H1 (cell line): ENCODE measurements at regions of chr14 and their contacts with region 1.

Region 1: DNA sequence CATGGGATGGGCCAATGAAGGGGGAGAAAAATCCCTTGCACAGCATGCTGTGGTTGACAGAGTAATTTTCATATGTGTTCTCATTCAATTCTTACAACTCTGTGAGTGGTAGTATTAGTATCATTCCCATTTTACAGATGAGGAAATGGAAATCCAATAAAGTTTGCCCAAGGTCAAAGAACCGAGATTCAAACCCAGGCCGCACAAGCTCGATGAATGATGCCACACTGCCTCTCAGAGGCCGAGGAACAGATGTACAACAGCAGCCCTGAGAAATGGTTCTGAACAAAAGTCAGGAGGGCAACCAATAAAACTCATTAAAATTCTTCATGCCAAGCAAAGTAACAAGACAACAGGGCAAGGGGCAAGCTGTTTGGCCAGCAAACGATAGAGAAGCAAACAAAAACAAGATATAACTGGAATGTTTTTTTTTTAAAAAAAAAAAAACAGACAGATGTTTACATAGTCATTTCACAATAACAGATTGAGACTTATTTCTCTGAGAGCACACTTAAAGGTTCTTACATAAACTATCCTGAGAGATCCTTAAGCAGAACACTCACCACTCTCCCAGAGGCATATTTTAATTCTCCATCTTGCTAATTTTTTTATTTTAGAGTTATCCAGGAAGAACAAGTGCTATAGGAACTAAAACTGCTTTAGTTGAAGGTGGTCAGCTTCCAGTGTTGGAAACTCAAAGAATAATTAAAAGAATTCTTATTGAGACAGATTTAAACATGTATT is 85.8 kb downstream of the EXOC5 start:
- DNase-seq: no peak
- H3K4me3 ChIP-seq: no peak overlapping the region
- H3K27ac ChIP-seq: no peak overlapping the region
- H3K4me1 ChIP-seq: peaks cover 0 to 2% (median 0%) of the 10 kb centered on the region in 4 experiments; a peak in 1 of 7 replicates
- H3K27me3 ChIP-seq: no peaks in the 10 kb centered on the region
- CTCF ChIP-seq: peak; percentile 78 to 87 (median 82)
- EP300 ChIP-seq: no peak
- POLR2A ChIP-seq: no peak
- RAD21 ChIP-seq: peak; percentile 98

Region 2: GRCh38 chr14:56555921-56556570 is 626.9 kb before region 1 on chr14:
- CTCF ChIA-PET with region 1: interaction called, 13 read pairs
- POLR2A ChIA-PET with region 1: no interaction called
- DNase-seq: no peak
- H3K4me3 ChIP-seq: no peak overlapping the region
- H3K27ac ChIP-seq: no peak overlapping the region
- H3K4me1 ChIP-seq: peaks cover 0 to 4% (median 0%) of the 10 kb centered on the region in 4 experiments; a peak in 1 of 7 replicates
- H3K27me3 ChIP-seq: no peaks in the 10 kb centered on the region
- CTCF ChIP-seq: peak in 2 of 3 experiments; percentile 51 to 77; a peak in 3 of 4 replicates
- EP300 ChIP-seq: no peak
- POLR2A ChIP-seq: no peak
- RAD21 ChIP-seq: peak; percentile 88 to 89

Region 3: GRCh38 chr14:57171363-57171762 is 11.6 kb before region 1 on chr14:
- CTCF ChIA-PET with region 1: interaction called, 29 read pairs
- POLR2A ChIA-PET with region 1: no interaction called
- DNase-seq: no peak
- H3K4me3 ChIP-seq: no peak overlapping the region
- H3K27ac ChIP-seq: no peak overlapping the region
- H3K4me1 ChIP-seq: peaks cover 0 to 2% (median under 1%) of the 10 kb centered on the region in 4 experiments; a peak in 2 of 7 replicates
- H3K27me3 ChIP-seq: peaks cover 0 to 1% (median 0%) of the 10 kb centered on the region in 4 experiments; a peak in 1 of 7 replicates
- CTCF ChIP-seq: no peak
- EP300 ChIP-seq: no peak
- POLR2A ChIP-seq: no peak
- RAD21 ChIP-seq: no peak

Region 4: GRCh38 chr14:57199921-57200320 is 17.0 kb after region 1 on chr14:
- CTCF ChIA-PET with region 1: interaction called, 11 read pairs
- POLR2A ChIA-PET with region 1: no interaction called
- DNase-seq: no peak
- H3K4me3 ChIP-seq: no peak overlapping the region
- H3K27ac ChIP-seq: no peak overlapping the region
- H3K4me1 ChIP-seq: no peaks in the 10 kb centered on the region
- H3K27me3 ChIP-seq: no peaks in the 10 kb centered on the region
- CTCF ChIP-seq: no peak
- EP300 ChIP-seq: no peak
- POLR2A ChIP-seq: no peak
- RAD21 ChIP-seq: no peak